Mammary epithelial cell (primary cell): ENCODE measurements at regions of chr5 and their contacts with region 1.

Region 1: GRCh38 chr5:138585157-138585556 is 10.0 kb upstream of the HSPA9 start:
- DNase-seq: no peak
- H3K4me3 ChIP-seq: no peak overlapping the region
- H3K27ac ChIP-seq: no peak overlapping the region
- H3K4me1 ChIP-seq: no peaks in the 10 kb centered on the region
- H3K27me3 ChIP-seq: no peaks in the 10 kb centered on the region
- CTCF ChIP-seq: no peak

Region 2: DNA sequence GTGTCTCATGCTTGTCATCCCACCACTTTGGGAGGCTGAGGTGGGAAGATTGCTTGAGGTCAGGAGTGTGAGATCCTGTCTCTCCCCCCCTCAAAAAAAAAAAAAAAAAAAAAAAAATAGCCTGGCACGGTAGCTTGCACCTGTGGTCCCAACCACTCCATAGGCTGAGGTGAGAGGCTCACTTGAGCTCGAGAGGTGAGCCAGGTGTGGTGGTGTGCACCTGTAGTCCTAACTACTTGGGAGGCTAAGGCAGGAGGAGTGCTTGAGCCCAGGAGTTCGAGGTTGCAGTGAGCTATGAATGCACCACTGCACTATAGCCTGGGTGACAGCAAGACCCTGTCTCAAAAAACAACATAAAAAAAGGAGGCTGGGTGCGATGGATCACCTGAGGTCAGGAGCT is 32.5 kb before region 1 on chr5:
- CTCF ChIA-PET with region 1: no interaction called
- dilution Hi-C with region 1: no loop called
- in situ Hi-C with region 1: no loop called
- intact Hi-C with region 1: no loop called
- DNase-seq: no peak
- H3K4me3 ChIP-seq: no peak overlapping the region
- H3K27ac ChIP-seq: no peak overlapping the region
- H3K4me1 ChIP-seq: no peaks in the 10 kb centered on the region
- H3K27me3 ChIP-seq: no peaks in the 10 kb centered on the region
- CTCF ChIP-seq: no peak

Region 3: DNA sequence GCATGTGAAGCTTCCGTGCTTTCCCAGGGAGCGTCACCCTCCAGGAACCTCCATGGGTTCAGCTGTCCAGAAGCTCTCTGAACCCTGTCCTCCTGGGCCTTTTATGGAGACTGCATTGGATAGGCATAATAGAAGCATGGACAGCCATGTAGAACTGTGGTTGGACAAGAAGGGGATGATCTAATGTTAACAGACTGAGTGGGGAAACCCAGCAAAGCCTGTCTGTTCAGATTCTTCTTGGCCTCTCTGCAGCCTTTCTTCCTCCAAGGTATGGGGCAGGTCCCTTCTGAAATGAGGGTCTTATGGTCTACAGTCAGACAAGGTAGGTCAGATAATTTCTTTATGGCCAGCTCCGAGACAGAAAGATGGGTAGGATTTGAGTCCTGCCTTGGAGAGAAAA is 109.0 kb after region 1 on chr5:
- CTCF ChIA-PET with region 1: no interaction called
- dilution Hi-C with region 1: loop called (anchors 5 kb)
- in situ Hi-C with region 1: no loop called
- intact Hi-C with region 1: no loop called
- DNase-seq: no peak
- H3K4me3 ChIP-seq: no peak overlapping the region
- H3K27ac ChIP-seq: no peak overlapping the region
- H3K4me1 ChIP-seq: no peaks in the 10 kb centered on the region
- H3K27me3 ChIP-seq: no peaks in the 10 kb centered on the region
- CTCF ChIP-seq: no peak